Psoas muscle (tissue), 8 donors: ENCODE measurements at regions of chr19 and their contacts with region 1.

Region 1: DNA sequence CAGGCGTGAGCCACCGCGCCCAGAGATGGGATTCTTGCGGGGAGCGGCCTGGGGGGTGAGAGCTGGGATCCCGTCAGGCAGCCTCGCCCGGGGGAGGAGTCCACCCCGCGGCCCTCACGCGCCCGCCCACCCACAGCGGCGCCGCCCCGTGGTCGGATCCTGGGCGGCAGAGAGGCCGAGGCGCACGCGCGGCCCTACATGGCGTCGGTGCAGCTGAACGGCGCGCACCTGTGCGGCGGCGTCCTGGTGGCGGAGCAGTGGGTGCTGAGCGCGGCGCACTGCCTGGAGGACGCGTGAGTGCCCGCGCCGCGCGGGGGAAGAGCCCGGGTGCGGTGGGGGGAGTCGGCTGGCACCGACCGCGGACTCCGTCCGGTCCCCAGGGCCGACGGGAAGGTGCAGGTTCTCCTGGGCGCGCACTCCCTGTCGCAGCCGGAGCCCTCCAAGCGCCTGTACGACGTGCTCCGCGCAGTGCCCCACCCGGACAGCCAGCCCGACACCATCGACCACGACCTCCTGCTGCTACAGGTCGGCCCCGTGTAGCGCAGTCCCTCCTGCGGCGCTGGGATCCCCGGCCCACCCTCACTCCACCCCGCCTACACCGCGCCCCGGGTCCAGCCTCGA is 1.1 kb downstream of the CFD start:
- DNase-seq: peak; percentile 82 to 87
- ATAC-seq: peak; percentile 25 to 50 (median 42)
- H3K4me3 ChIP-seq: peak overlapping the region; percentile 55
- H3K27ac ChIP-seq: no peak overlapping the region
- H3K4me1 ChIP-seq: peaks cover 9% of the 10 kb centered on the region
- H3K27me3 ChIP-seq: peaks cover 0 to 62% (median 11%) of the 10 kb centered on the region in 3 donors
- CTCF ChIP-seq: no peak

Region 2: DNA sequence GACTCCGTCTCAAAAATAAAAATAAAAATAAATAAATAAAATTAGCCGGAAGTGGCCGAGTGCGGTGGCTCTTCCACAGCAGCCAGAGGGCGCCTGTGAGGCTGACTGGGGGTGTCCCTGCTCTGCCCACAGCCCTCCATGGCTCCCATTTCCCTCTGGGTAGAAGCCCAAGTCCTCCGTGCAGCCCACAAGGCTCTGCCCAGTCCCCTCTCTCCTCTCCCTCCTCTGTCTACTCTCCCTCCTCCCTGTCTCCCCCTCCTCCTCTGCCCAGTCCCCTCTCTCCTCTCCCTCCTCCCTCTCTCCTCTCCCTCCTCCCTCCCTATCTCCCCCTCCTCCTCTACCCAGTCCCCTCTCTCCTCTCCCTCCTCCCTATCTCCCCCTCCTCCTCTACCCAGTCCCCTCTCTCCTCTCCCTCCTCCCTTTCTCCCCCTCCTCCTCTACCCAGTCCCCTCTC is 89.2 kb before region 1 on chr19:
- intact Hi-C with region 1: loop called in 1 of 2 experiments (anchors 5 kb)
- DNase-seq: peak in 1 of 2 donors; percentile 72
- ATAC-seq: peak in 3 of 4 donors; percentile 36 to 60 (median 51)
- H3K4me3 ChIP-seq: no peak overlapping the region
- H3K27ac ChIP-seq: no peak overlapping the region
- H3K4me1 ChIP-seq: no peaks in the 10 kb centered on the region
- H3K27me3 ChIP-seq: peaks cover 0 to 5% (median 0%) of the 10 kb centered on the region in 3 donors
- CTCF ChIP-seq: peak; percentile 53

Region 3: GRCh38 chr19:917323-918151 is 56.9 kb after region 1 on chr19 and contains the start of gene KISS1R:
- intact Hi-C with region 1: loop called (anchors 2 to 5 kb)
- DNase-seq: no peak
- ATAC-seq: peak in 1 of 4 donors; percentile 12
- H3K4me3 ChIP-seq: peak within 1 kb of the TSS; percentile 48
- H3K27ac ChIP-seq: no peak within 1 kb of the TSS
- H3K4me1 ChIP-seq: peaks cover 20% of the 10 kb centered on the region
- H3K27me3 ChIP-seq: peaks cover 0 to 53% (median 18%) of the 10 kb centered on the region in 3 donors
- CTCF ChIP-seq: peak; percentile 25
- total RNA-seq, gene KISS1R: not detected

Region 4: GRCh38 chr19:1001538-1002166 is 141.1 kb after region 1 on chr19:
- intact Hi-C with region 1: loop called in 1 of 2 experiments (anchors 1 kb)
- DNase-seq: peak in 1 of 2 donors; percentile 80
- ATAC-seq: peak; percentile 54 to 84 (median 70)
- H3K4me3 ChIP-seq: no peak overlapping the region
- H3K27ac ChIP-seq: no peak overlapping the region
- H3K4me1 ChIP-seq: no peaks in the 10 kb centered on the region
- H3K27me3 ChIP-seq: peaks cover 0 to 63% (median 31%) of the 10 kb centered on the region in 3 donors
- CTCF ChIP-seq: peak; percentile 87